ENCODE measurements at regions of chr15 and their contacts with region 1.

Region 1: GRCh38 chr15:29747837-29748417 is 74.3 kb downstream of the TJP1 start:
- DNase-seq: no peak

Region 2: DNA sequence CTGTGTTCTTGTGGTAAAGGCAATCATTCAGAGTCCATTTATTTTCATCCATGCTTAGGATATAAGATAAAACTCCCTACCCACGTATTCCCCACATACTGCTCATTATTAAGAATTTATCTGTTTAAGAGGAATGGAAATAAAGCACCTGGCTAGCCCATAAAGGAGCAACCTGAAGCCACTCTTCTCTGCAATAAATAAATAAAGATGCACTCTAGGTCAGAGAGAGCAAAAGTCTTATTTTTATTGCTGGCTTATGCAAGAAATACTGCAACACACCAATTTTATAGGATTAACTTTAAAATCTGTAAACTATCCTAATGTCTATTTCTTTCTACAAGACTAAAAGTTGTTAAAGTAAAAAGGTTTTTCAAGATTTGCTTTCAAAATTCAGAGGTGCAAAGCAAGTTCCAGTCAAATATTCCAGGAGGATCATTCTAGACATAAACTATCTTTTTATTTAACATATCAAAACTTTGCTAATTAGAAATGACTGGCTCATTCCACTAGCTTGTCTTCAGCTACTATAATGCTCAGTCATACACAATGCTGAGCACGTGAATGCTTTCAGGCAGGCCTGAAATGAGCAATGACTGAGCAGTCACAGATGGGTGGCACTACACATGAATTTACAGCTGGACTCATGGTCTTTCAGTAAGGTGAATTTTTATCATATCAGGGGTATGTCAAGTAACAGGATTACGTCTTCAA is 67.2 kb after region 1 on chr15:
- intact Hi-C with region 1: loop called (anchors 5 kb)
- DNase-seq: no peak

Region 3: GRCh38 chr15:29925227-29926082 is 177.5 kb after region 1 on chr15:
- intact Hi-C with region 1: loop called (anchors 10 kb)
- DNase-seq: peak in 4 of 10 donors; percentile 41 to 88 (median 62)

Region 4: GRCh38 chr15:30043211-30043655 is 295.3 kb after region 1 on chr15:
- intact Hi-C with region 1: loop called (anchors 5 kb)
- DNase-seq: no peak

Measured in posterior cingulate gyrus (tissue), 11 donors.